ENCODE measurements at regions of chr7 and their contacts with region 1.

Region 1: GRCh38 chr7:74068393-74069085 is 15.1 kb upstream of the LIMK1 start:
- DNase-seq: peak in 1 of 2 donors; percentile 49
- ATAC-seq: no peak
- H3K4me3 ChIP-seq: no peak overlapping the region
- H3K27ac ChIP-seq: no peak overlapping the region
- H3K4me1 ChIP-seq: no peaks in the 10 kb centered on the region
- H3K27me3 ChIP-seq: no peaks in the 10 kb centered on the region
- CTCF ChIP-seq: no peak

Region 2: GRCh38 chr7:74173866-74174605 is 105.5 kb after region 1 on chr7 and contains the start of gene EIF4H:
- intact Hi-C with region 1: loop called in 1 of 2 experiments (anchors 5 kb)
- DNase-seq: peak; percentile 97 to 98
- ATAC-seq: peak; percentile 95 to 97 (median 96)
- H3K4me3 ChIP-seq: peak within 1 kb of the TSS; percentile 96
- H3K27ac ChIP-seq: peak within 1 kb of the TSS; percentile 97
- H3K4me1 ChIP-seq: peaks cover 44% of the 10 kb centered on the region
- H3K27me3 ChIP-seq: no peaks in the 10 kb centered on the region
- CTCF ChIP-seq: no peak
- total RNA-seq, gene EIF4H: 223 to 327 (median 284) TPM

Region 3: GRCh38 chr7:74183613-74184450 is 115.3 kb after region 1 on chr7:
- intact Hi-C with region 1: loop called in 1 of 2 experiments (anchors 5 kb)
- DNase-seq: no peak
- ATAC-seq: no peak
- H3K4me3 ChIP-seq: peak overlapping the region; percentile 1
- H3K27ac ChIP-seq: peak overlapping the region; percentile 74
- H3K4me1 ChIP-seq: peaks cover 100% of the 10 kb centered on the region
- H3K27me3 ChIP-seq: no peaks in the 10 kb centered on the region
- CTCF ChIP-seq: peak; percentile 11

Region 4: GRCh38 chr7:74206589-74207120 is 138.1 kb after region 1 on chr7:
- intact Hi-C with region 1: loop called in 1 of 2 experiments (anchors 2 kb)
- DNase-seq: peak; percentile 87 to 92
- ATAC-seq: peak; percentile 82 to 91 (median 86)
- H3K4me3 ChIP-seq: peak overlapping the region; percentile 50
- H3K27ac ChIP-seq: no peak overlapping the region
- H3K4me1 ChIP-seq: peaks cover 2% of the 10 kb centered on the region
- H3K27me3 ChIP-seq: no peaks in the 10 kb centered on the region
- CTCF ChIP-seq: peak; percentile 97

Region 5: DNA sequence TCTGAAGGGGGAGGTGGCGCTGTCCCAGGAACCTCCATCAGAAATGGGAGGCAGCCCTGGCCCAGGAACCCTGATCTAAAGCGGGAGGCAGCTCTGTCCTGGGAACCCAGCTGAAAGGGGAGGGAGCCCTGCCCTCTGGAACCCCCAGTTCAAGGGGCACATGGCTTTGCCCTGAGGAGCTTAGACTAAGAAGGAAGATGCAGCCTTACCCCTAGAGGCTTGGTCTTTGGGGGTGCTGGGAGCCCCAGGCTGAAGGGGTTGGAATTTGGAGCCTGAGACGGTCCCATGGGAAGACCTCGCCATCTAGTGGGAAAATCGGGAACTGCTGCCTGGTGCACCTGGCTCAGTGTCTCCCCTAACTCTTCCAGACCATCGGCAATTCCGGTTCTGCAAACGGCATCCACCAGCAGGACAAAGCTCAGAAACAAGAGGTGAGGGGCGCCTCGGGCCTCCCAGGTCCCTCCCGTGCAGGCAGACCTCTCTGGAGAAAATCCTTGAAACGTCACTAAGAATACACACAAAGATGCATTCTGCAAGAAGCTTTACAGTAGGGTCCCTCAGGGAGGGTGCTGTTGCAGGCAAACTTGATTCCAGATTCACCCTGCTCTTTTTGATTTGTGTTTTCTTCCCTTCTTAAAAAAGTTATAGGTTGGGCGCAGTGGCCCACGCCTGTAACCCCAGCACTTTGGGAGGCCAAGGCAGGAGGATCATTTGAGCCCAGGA is 332.8 kb after region 1 on chr7:
- intact Hi-C with region 1: loop called (anchors 2 to 5 kb)
- DNase-seq: peak; percentile 65 to 80
- ATAC-seq: peak; percentile 66 to 89 (median 80)
- H3K4me3 ChIP-seq: no peak overlapping the region
- H3K27ac ChIP-seq: no peak overlapping the region
- H3K4me1 ChIP-seq: no peaks in the 10 kb centered on the region
- H3K27me3 ChIP-seq: no peaks in the 10 kb centered on the region
- CTCF ChIP-seq: peak; percentile 98

Measured in psoas muscle (tissue), 8 donors.